BJ (cell line): ENCODE measurements at regions of chr4 and their contacts with region 1.

Region 1: GRCh38 chr4:111854494-111855087 is 290.7 kb upstream of the FAM241A start:
- DNase-seq: peak; percentile 15
- H3K4me3 ChIP-seq: no peak overlapping the region
- H3K27me3 ChIP-seq: no peaks in the 10 kb centered on the region; the same call in 1 of the 2 replicates
- CTCF ChIP-seq: peak; percentile 70

Region 2: GRCh38 chr4:111631215-111631999 is 223.2 kb before region 1 on chr4:
- CTCF ChIA-PET with region 1: interaction called, 14 read pairs
- POLR2A ChIA-PET with region 1: no interaction called
- DNase-seq: no peak
- H3K4me3 ChIP-seq: no peak overlapping the region
- H3K27me3 ChIP-seq: no peaks in the 10 kb centered on the region
- CTCF ChIP-seq: peak; percentile 56

Region 3: DNA sequence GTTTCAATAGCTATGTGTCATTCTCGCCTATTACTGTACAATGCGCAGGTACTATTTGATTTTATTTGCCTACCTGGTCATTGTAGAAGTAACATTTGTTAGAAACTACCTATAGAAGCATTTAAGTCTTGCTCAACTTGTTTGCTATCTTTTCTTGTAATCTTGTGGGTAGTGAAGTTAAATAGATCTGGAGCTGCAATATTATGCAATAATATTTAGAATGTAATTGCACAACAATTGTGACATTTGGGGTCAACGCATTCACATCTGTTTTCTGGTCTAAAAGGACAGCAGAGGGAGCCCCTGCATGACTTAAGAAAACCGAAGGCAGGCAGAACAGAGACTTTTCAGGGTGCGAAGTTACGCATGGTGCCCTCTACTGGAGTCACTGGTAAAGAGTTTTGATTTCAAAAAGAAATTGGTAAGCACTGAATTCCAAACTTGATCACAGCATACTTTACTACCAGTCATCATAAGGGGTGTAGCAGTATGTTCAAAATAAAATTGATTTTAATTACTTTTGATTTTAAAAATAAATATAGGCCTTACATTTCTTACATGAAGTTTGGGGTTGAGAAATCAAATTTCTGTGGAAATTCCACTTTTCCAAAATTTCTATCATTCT is 212.5 kb before region 1 on chr4:
- CTCF ChIA-PET with region 1: interaction called, 21 read pairs
- POLR2A ChIA-PET with region 1: no interaction called
- DNase-seq: peak; percentile 55
- H3K4me3 ChIP-seq: no peak overlapping the region
- H3K27me3 ChIP-seq: no peaks in the 10 kb centered on the region
- CTCF ChIP-seq: peak; percentile 91

Region 4: GRCh38 chr4:111649308-111649707 is 205.3 kb before region 1 on chr4:
- CTCF ChIA-PET with region 1: interaction called, 13 read pairs
- POLR2A ChIA-PET with region 1: no interaction called
- DNase-seq: no peak
- H3K4me3 ChIP-seq: no peak overlapping the region
- H3K27me3 ChIP-seq: no peaks in the 10 kb centered on the region
- CTCF ChIP-seq: no peak

Region 5: DNA sequence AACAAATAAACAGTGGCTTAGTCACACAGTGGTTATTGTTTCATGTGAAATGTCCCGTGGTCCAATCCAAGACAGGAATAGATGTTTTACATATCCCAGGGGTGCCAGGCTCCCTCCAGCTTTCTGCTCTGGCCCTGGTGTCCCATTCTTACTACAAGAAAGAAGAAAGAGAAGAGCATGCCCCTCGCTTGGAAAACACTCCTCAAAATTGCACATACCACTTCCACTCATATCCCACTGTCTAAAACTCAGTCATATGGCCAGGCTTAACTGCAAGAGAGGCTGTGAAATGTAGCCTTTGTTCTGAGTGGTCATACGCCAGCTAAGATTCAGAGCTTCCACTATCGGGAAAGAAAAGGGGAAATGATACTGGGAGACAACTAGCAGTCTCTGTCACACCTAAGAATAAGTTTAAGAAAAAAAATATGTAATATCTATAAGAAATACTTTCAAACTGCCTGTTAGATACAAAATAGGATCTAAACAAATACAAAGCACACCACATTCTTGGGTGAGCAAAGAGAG is 16.1 kb before region 1 on chr4:
- CTCF ChIA-PET with region 1: interaction called, 10 read pairs
- POLR2A ChIA-PET with region 1: no interaction called
- DNase-seq: no peak
- H3K4me3 ChIP-seq: no peak overlapping the region
- H3K27me3 ChIP-seq: no peaks in the 10 kb centered on the region
- CTCF ChIP-seq: no peak

Region 6: DNA sequence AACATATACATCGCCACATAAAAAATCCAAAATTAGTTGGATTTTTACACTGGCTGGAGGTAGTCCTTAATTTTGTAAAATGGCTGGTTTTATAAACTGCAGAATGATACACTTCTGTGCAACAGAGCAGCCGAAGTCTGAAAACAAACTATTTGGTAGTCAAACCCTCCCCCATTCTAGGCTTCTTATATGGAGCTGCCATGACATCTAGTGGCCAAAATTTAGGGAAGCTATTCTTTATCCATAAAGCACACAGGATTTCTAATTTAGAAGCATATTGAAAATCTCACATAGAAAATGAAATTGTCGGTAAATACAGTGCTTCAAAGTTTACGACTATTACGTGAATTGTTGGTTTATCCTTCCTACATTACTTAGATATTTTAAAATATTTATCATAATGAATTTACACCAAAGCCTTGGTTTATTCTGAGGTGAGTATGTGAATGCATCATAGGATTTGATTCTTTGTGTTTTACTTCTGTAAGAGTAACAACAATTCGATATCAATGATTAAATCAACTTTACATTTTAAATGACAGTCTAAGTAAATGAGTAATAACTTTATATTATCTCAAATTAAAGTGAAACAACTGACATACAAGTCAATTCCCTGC is 177.2 kb after region 1 on chr4:
- CTCF ChIA-PET with region 1: interaction called, 11 read pairs
- POLR2A ChIA-PET with region 1: no interaction called
- DNase-seq: no peak
- H3K4me3 ChIP-seq: no peak overlapping the region
- H3K27me3 ChIP-seq: 0 out of 2 replicates have a peak, but pooled peaks cover 1% of the 10 kb centered on the region
- CTCF ChIP-seq: peak; percentile 70